Endothelial cell of umbilical vein (primary cell): ENCODE measurements at regions of chr6 and their contacts with region 1.

Region 1: DNA sequence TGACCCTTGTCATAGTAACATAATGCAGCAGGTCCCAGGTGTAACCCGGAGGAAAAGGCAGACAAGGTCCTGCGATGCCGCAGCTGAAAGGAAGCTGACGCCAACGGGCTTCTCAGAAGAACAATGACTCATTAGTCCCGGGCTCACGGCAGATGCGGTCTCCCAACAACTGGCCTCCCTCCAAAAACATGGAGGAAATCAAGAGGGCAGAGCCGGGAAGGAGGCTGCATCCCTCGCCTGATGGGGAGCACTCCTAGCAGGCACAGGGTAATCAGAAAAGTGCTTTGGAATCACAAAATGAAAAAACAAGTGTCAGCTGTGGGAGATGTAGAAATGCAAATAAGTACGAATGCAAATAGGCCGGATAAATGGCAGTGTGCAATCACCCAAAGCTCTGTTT is 165.2 kb upstream of the AGPAT4 start:
- DNase-seq: peak; percentile 85
- H3K4me3 ChIP-seq: no peak overlapping the region
- H3K27ac ChIP-seq: no peak overlapping the region
- H3K4me1 ChIP-seq: peaks cover 2% of the 10 kb centered on the region
- H3K27me3 ChIP-seq: no peaks in the 10 kb centered on the region
- CTCF ChIP-seq: no peak
- POLR2A ChIP-seq: no peak

Region 2: DNA sequence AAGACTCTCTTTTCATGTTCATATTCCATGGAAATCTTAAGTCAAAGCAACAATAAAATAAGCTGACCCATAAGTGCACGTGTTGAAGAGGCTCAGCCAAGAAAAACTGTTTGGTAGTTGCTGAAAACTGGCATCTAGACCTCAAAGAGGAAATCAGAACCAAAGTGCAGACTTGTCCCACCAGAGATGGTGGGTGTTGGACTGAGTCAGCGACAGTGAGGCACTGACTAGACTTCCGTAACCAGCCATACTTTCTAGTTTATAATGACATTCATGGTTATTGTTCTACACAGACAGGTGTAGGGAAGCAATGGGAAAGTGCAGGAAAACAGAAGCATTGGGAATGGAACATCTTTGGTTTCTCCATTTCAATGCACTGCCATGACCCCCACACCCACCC is 10.4 kb after region 1 on chr6:
- CTCF ChIA-PET with region 1: no interaction called
- POLR2A ChIA-PET with region 1: no interaction called
- dilution Hi-C with region 1: no loop called
- intact Hi-C with region 1: loop called (anchors 1 kb)
- DNase-seq: peak; percentile 86
- H3K4me3 ChIP-seq: no peak overlapping the region
- H3K27ac ChIP-seq: no peak overlapping the region
- H3K4me1 ChIP-seq: no peaks in the 10 kb centered on the region
- H3K27me3 ChIP-seq: no peaks in the 10 kb centered on the region
- CTCF ChIP-seq: no peak
- POLR2A ChIP-seq: no peak

Region 3: GRCh38 chr6:161486361-161487216 is 47.5 kb after region 1 on chr6:
- CTCF ChIA-PET with region 1: no interaction called
- POLR2A ChIA-PET with region 1: no interaction called
- dilution Hi-C with region 1: no loop called
- intact Hi-C with region 1: loop called (anchors 1 kb)
- DNase-seq: peak; percentile 34
- H3K4me3 ChIP-seq: no peak overlapping the region
- H3K27ac ChIP-seq: no peak overlapping the region
- H3K4me1 ChIP-seq: no peaks in the 10 kb centered on the region
- H3K27me3 ChIP-seq: no peaks in the 10 kb centered on the region
- CTCF ChIP-seq: no peak
- POLR2A ChIP-seq: no peak

Region 4: GRCh38 chr6:161618831-161619454 is 179.8 kb after region 1 on chr6:
- CTCF ChIA-PET with region 1: no interaction called
- POLR2A ChIA-PET with region 1: no interaction called
- dilution Hi-C with region 1: no loop called
- intact Hi-C with region 1: no loop called
- DNase-seq: no peak
- H3K4me3 ChIP-seq: no peak overlapping the region
- H3K27ac ChIP-seq: no peak overlapping the region
- H3K4me1 ChIP-seq: no peaks in the 10 kb centered on the region
- H3K27me3 ChIP-seq: no peaks in the 10 kb centered on the region
- CTCF ChIP-seq: no peak
- POLR2A ChIP-seq: no peak